ENCODE measurements at regions of chr19 and their contacts with region 1.

Region 1: GRCh38 chr19:2273356-2274184 is 8.4 kb downstream of the PEAK3 start:
- DNase-seq: peak; percentile 82
- H3K4me3 ChIP-seq: peak overlapping the region; percentile 8
- H3K27ac ChIP-seq: peak overlapping the region; percentile 79
- H3K4me1 ChIP-seq: peaks cover 38% of the 10 kb centered on the region
- H3K27me3 ChIP-seq: no peaks in the 10 kb centered on the region
- CTCF ChIP-seq: peak; percentile 98

Region 2: GRCh38 chr19:2157452-2157851 is 116.1 kb before region 1 on chr19:
- intact Hi-C with region 1: loop called (anchors 2 kb)
- DNase-seq: no peak
- H3K4me3 ChIP-seq: no peak overlapping the region
- H3K27ac ChIP-seq: no peak overlapping the region
- H3K4me1 ChIP-seq: no peaks in the 10 kb centered on the region
- H3K27me3 ChIP-seq: no peaks in the 10 kb centered on the region
- CTCF ChIP-seq: no peak

Region 3: GRCh38 chr19:2236314-2237050 is 37.1 kb before region 1 on chr19 and contains the starts of genes PLEKHJ1 and SF3A2:
- intact Hi-C with region 1: loop called (anchors 5 kb)
- DNase-seq: peak; percentile 97
- H3K4me3 ChIP-seq: peak within 1 kb of the TSS; percentile 97
- H3K27ac ChIP-seq: peak within 1 kb of the TSS; percentile 100
- H3K4me1 ChIP-seq: peaks cover 27% of the 10 kb centered on the region
- H3K27me3 ChIP-seq: no peaks in the 10 kb centered on the region
- CTCF ChIP-seq: peak; percentile 97
- total RNA-seq, gene PLEKHJ1: 176 to 238 TPM
- total RNA-seq, gene SF3A2: 60.9 to 99.8 TPM

Region 4: GRCh38 chr19:2315818-2316353 is 42.3 kb after region 1 on chr19:
- intact Hi-C with region 1: loop called (anchors 5 kb)
- DNase-seq: peak; percentile 59
- H3K4me3 ChIP-seq: no peak overlapping the region
- H3K27ac ChIP-seq: no peak overlapping the region
- H3K4me1 ChIP-seq: no peaks in the 10 kb centered on the region
- H3K27me3 ChIP-seq: peaks cover 8% of the 10 kb centered on the region
- CTCF ChIP-seq: peak; percentile 39

Region 5: GRCh38 chr19:2391118-2391725 is 117.7 kb after region 1 on chr19:
- intact Hi-C with region 1: loop called (anchors 2 kb)
- DNase-seq: peak; percentile 48
- H3K4me3 ChIP-seq: no peak overlapping the region
- H3K27ac ChIP-seq: no peak overlapping the region
- H3K4me1 ChIP-seq: no peaks in the 10 kb centered on the region
- H3K27me3 ChIP-seq: no peaks in the 10 kb centered on the region
- CTCF ChIP-seq: peak; percentile 64